GM18951 (cell line): ENCODE measurements at regions of chr14 and their contacts with region 1.

Region 1: DNA sequence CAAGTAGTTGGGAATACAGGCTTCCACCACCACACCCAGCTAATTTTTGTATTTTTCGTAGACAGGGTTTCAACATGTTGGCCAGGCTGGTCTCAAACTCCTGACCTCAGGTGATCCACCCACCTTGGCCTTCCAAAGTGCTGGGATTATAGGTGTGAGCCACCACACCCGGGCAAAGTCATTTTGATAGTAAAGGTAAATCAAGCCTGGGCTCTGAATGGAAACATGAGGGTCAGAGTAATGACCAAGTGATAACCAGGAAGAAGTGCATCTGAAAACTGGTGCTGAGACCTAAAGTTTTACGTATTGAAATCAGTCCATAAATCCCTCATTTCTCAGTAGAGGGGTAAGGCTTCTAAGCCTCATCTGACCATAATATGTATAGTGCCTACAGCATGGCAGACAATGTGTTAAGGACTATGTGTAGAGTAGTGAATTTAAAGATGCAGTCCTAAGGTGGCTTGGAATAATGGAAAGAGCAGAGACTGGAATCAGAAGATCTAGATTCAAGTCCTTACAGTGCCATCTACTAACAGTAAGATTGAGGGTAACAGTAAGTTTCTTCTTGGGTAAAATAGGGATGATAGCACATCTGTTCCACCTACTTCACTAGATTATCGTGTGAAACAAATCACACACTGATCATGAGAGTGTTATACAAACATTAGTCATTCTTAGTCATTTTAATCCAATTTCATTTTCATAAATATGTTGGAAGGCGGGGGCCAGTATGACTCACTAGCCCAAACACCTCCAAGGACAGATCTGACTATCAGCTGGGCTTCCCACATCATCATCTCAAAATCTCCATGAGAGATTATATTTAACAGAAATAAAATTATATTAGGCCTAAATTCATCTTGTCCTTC is 11.2 kb downstream of the MAP4K5 start:
- POLR2A ChIP-seq: no peak

Region 2: DNA sequence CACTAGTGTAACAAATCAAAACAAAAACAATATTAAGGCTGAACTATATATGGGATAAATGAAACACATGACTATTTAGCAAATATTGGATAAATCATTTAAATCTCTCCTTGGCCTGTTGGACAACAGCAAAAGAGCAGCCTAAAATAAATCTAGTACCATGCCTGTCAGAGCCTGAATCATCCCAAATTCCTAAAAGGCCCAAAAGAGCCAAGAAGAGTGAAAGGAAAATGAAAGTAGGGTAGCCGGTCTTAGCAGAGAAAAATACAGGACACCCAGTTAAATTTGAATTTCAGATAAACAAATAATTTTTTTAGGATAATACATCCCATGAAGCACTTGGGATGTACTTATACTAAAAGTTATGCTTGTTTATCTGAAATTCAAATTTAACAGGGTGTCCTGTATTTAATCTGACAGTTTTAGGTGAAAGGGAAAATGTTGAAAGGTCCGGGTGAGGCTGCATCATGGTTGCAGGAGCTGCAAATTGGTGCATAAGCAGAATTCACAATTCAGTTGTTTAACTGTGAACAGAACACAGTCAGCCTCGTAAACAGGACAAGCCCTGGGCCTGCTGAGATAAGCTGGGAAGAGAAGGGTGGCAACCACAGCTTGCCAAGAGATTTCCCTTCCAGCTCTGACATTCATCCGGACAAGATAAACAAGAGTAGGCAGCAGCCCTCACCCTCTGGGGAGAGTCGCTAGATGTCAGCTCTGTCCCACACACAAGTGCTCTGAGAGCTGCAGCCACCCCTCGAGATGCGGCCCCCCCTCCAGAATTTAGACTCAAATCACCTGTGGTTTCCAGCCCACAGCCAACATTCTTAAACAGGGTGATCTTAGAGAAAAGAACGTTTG is 178.7 kb before region 1 on chr14:
- in situ Hi-C with region 1: loop called (anchors 10 kb)
- POLR2A ChIP-seq: no peak

Region 3: DNA sequence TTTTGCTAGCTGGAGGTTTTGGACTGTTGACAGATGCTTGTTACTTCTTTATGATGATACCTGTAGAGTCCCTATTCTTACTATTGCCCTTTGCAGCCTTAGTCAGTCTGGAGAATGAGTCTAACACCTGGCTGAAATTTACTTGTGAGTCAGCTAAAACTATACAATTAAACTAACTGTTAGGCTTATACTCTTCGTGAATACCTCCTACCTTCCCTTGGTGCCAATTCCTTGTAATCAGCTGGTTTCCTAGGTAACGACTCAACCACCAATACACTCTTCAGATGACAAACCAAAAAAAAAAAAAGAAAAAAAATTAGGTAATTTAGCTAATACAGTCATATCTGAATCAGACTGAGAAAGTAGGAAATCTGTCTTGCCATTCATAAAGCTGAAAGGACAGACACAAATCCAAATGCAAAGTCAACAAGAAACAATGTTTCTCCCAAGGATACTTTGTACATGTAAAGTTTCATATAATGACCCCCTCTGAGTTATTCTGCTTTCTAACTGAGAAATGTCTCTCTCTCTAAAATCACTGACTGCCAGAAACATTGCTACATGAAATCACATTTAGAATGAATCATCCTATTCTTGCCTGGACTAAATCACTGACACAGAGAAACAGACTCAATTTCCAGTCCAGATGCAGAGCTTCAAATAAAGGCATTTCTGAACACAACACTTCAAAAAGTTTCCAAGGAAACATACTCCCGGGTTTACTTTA is 68.0 kb before region 1 on chr14:
- in situ Hi-C with region 1: no loop called
- POLR2A ChIP-seq: no peak